ENCODE measurements at regions of chr4 and their contacts with region 1.

Region 1: GRCh38 chr4:145732895-145733880 is 53.2 kb downstream of the C4orf51 start:
- DNase-seq: peak; percentile 95
- ATAC-seq: peak; percentile 98

Region 2: DNA sequence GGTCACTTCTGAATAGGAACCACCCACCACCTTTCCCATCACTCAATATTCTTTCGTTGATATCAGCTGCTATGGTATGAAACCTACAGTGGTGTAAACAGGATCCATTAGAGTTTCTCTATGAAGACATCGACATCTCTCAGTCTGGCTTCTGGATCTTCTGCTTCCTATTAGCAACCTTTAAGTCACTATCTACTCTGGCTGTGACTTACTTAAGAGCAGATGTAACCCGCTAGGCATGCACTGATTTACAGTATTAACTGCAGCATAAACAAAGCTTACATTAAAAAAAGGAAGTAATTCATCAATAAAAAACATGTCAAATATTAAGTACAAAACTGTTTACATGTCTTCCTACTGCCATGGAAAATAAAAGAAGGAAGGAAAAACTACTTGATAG is 731.6 kb before region 1 on chr4:
- intact Hi-C with region 1: no loop called
- DNase-seq: no peak
- ATAC-seq: no peak

Region 3: GRCh38 chr4:145679991-145680455 is 53.2 kb before region 1 on chr4 and contains the start of gene C4orf51:
- intact Hi-C with region 1: loop called (anchors 5 kb)
- DNase-seq: no peak
- ATAC-seq: peak; percentile 62
- total RNA-seq, gene C4orf51: not detected

Region 4: DNA sequence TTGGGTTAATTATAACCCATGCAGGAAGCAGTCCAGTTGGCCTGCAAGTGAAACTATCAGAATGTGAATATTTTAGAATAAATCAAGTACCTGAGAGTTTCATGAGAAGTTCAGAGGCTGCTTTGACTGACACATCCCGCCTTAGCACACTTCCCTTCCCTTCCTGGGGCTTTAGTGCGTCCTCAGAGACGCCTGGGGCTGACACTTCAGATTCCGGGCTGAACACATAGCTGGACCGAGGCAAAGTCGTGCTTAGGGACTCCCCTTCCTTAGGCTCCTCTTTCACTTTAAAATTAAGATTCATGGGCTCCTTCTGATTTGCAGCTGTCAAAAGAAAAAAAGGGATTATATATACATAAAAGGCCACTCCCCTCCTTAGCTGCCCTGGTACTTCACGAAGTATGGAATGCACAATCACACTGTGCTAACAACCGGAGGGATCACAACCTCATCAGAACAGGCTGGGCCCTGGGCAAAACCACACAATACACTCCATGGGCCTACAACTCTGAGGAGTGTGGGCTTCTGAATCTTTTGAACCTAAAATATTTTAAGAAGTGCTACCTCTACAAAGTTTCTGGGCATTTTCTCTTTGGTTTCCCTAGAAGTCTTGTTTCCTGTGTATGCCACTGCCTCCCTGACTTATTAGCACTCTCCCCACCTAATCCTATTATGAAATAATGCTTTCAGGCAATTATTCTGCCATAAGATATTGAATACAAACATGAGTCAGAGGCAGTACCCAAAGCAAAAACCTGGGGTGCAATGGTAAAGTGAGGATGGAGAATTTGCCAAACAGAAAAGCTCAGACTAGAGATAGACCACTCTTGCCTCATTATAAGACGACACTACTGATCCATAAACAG is 137.2 kb after region 1 on chr4:
- intact Hi-C with region 1: loop called (anchors 5 kb)
- DNase-seq: no peak
- ATAC-seq: no peak